Dendritic cell treated with granulocyte-macrophage colony-stimulating factor and Interleukin-4, amounts not matched to agents 40 ng/mL and 50 ng/mL, for 4 days (primary cell): ENCODE measurements at regions of chr21 and their contacts with region 1.

Region 1: DNA sequence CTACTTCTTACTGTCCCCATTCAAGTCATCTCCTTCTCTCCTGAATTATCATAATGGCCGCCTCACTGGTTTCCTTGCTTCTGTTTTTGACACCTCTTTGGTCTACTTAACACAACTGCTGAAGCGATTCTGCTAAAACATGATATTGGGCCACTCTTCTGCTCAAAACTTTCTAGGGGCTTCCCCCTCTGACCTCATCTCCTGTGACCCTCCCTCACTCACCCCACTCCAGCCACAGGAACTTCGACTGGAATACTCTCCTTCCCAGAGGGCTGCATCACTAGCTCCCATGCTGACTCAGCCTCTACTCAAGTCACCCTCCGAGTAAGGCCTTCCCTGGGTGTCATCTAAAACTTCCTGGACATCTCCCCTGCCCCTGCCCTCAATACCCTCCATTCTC is 35.7 kb downstream of the NRIP1 start:
- H3K4me3 Mint-ChIP-seq: no peak overlapping the region
- H3K27ac Mint-ChIP-seq: no peak overlapping the region
- H3K4me1 Mint-ChIP-seq: peaks cover 26% of the 10 kb centered on the region
- H3K27me3 Mint-ChIP-seq: no peaks in the 10 kb centered on the region

Region 2: GRCh38 chr21:14901482-14901958 is 127.6 kb before region 1 on chr21:
- intact Hi-C with region 1: no loop called
- H3K4me3 Mint-ChIP-seq: no peak overlapping the region
- H3K27ac Mint-ChIP-seq: no peak overlapping the region
- H3K4me1 Mint-ChIP-seq: peaks cover 5% of the 10 kb centered on the region
- H3K27me3 Mint-ChIP-seq: no peaks in the 10 kb centered on the region

Region 3: DNA sequence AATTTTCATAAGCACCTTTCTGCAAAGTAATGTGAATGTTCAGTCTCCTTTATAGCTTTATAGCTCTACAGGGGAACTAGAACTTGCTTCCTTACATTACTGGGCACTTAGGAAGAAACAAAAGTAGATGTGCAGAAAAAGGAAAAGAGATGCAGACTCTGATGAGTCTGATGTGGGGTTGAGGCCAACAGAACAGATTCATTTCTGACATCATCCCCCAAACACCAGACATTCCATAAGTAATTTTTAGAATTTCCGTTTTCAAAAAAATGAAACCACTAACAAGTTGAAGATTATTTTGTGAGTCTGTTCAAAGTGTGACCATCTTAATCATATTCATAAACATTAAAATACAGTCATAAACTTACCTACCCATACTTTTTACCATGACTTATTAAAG is 60.3 kb before region 1 on chr21:
- intact Hi-C with region 1: loop called (anchors 10 kb)
- H3K4me3 Mint-ChIP-seq: no peak overlapping the region
- H3K27ac Mint-ChIP-seq: no peak overlapping the region
- H3K4me1 Mint-ChIP-seq: peaks cover 20% of the 10 kb centered on the region
- H3K27me3 Mint-ChIP-seq: no peaks in the 10 kb centered on the region